ENCODE measurements at regions of chr9 and their contacts with region 1.

Region 1: DNA sequence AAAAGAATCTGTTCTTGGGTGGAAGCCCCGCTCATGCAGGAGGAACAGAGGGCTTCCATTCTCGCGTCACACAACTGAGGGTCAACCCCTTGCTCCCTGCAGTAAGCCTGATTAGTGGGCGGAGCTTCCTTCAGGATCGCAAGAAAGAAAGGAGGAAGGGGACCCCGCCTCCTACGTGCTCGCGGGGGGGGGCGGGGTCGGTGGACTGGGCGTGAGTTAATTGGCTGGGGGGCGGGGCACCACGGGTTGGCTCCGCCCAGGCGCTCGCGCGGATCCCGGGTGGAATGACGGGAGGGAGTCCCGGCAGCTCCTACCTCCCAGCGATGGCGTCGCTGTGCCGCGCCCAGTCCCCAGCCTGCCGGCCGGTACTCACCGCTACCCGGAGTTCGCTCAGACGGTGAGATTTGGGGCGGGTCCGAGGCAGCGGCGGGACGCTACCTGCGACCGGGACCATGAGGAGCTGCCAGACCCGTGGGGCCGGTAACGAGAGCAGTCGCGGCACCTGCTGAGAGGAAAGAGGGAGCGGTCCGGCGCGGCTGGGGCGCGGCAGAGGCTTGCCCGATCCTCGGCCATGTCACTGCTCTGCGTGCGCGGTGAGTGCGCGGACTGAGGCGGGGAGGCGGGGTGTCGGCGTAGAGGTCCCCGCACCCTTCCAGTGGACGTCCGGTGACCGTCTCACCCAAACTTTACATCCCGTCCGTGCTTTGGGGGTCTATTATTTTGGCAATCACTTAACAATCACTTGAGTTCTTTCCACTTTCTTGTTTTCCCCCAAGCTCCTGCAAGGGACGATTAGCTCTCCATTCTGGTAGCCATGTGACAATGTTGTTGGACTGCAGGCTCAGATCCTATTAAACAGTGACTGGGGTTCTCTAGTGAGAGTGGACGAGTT is at the start of gene UNC13B:
- DNase-seq: peak; percentile 91
- H3K4me3 ChIP-seq: peak within 1 kb of the TSS; percentile 71 to 97 (median 90)
- H3K27ac ChIP-seq: peak within 1 kb of the TSS; percentile 53
- H3K4me1 ChIP-seq: peaks cover 13% of the 10 kb centered on the region
- H3K27me3 ChIP-seq: no peaks in the 10 kb centered on the region
- CTCF ChIP-seq: peak in 1 of 2 donors; percentile 28
- total RNA-seq, gene UNC13B: 20.0 to 22.3 TPM

Region 2: DNA sequence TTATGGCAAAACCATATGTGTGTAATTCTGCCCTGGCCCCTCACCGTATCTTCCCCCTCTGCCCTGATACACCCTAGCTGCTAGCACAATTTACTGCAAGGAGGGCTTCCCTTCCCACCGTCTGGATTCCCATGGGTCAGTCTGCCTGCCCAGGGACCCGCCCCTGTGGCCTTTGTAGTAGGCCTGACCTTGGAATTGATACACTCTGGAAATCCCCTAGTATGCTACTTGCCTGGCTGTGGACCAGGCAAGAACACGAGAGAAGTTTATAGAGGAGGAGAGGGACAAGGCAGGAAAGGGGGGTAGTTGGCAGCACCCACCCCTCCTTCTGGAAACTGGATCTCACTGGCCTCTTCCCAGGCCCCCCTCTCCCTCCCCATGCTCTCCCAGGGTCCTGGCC is 336.2 kb before region 1 on chr9:
- CTCF ChIA-PET with region 1: no interaction called
- dilution Hi-C with region 1: no loop called
- in situ Hi-C with region 1: no loop called
- intact Hi-C with region 1: no loop called
- DNase-seq: no peak
- H3K4me3 ChIP-seq: no peak overlapping the region
- H3K27ac ChIP-seq: no peak overlapping the region
- H3K4me1 ChIP-seq: no peaks in the 10 kb centered on the region
- H3K27me3 ChIP-seq: peaks cover 3% of the 10 kb centered on the region
- CTCF ChIP-seq: no peak

Region 3: DNA sequence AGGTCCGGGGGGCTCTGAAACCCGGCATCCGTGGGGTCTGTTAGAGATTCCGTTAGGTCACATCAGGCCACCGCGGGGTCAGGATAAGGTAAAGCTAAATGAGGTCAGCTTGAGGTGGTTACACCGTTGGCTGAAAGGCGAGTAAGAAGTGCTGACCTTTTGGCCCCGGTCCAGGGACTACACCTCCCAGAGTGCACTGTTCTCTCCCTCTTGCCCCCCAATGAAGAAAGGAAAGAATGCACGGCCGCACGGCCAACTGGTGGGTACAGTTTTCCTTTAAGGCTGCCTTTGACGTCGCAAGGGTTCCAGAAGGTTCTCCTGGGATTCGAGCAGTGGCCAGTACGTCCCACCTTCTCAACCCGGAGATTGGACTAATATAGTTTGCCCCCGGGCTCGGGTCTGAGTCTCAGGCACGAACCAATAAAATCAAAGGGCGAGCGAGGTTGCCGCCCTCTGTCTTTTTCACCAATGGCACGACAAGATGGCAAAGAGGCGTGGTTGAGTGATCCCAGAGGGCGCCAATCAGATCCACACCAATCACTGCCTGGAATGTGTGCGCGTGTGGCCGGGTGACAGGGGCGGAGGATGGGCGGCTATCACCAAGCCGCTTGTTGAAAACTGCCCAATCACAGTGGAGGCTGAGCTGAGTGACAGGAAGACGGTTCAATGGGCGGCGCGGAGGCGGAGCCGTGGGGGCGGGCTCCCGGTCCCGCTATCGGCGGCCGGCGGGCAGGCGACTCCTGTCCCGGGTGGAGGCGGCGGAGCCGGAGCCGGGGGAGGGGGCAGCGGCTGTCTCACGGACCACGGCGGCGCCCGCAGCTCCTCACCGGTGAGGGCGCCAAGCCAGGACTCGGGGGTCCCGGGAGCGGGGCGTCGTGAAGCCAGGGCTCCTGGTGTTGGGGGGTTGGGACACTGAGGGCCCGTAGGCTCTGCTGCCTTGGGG is 172.7 kb before region 1 on chr9 and contains the start of gene DNAJB5:
- CTCF ChIA-PET with region 1: no interaction called
- dilution Hi-C with region 1: no loop called
- in situ Hi-C with region 1: no loop called
- intact Hi-C with region 1: no loop called
- DNase-seq: peak; percentile 99
- H3K4me3 ChIP-seq: peak within 1 kb of the TSS; percentile 63 to 88 (median 72)
- H3K27ac ChIP-seq: peak within 1 kb of the TSS; percentile 52
- H3K4me1 ChIP-seq: peaks cover 41% of the 10 kb centered on the region
- H3K27me3 ChIP-seq: no peaks in the 10 kb centered on the region
- CTCF ChIP-seq: no peak
- total RNA-seq, gene DNAJB5: 8.4 to 10.0 TPM

Region 4: DNA sequence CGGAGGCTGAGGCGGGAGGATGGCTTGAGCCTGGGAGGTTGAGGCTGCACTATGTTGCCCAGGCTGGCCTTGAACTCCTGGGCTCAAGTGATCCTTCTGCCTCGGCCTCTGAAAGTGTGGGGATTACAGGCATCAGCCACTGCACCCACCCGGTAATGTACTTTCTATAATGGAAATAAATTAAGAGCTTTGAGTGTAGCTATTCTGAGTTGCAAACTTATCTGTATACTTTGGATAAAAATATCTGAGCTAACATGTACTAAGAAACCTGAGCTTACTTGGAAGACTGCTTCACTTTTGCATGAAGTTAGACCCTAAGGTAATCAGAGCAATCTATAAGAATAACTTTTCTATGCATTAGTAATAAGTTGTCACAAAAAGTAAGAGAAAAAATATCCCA is 49.9 kb after region 1 on chr9:
- CTCF ChIA-PET with region 1: no interaction called
- dilution Hi-C with region 1: no loop called
- in situ Hi-C with region 1: no loop called
- intact Hi-C with region 1: loop called (anchors 10 kb)
- DNase-seq: no peak
- H3K4me3 ChIP-seq: no peak overlapping the region
- H3K27ac ChIP-seq: no peak overlapping the region
- H3K4me1 ChIP-seq: no peaks in the 10 kb centered on the region
- H3K27me3 ChIP-seq: no peaks in the 10 kb centered on the region
- CTCF ChIP-seq: no peak

Region 5: DNA sequence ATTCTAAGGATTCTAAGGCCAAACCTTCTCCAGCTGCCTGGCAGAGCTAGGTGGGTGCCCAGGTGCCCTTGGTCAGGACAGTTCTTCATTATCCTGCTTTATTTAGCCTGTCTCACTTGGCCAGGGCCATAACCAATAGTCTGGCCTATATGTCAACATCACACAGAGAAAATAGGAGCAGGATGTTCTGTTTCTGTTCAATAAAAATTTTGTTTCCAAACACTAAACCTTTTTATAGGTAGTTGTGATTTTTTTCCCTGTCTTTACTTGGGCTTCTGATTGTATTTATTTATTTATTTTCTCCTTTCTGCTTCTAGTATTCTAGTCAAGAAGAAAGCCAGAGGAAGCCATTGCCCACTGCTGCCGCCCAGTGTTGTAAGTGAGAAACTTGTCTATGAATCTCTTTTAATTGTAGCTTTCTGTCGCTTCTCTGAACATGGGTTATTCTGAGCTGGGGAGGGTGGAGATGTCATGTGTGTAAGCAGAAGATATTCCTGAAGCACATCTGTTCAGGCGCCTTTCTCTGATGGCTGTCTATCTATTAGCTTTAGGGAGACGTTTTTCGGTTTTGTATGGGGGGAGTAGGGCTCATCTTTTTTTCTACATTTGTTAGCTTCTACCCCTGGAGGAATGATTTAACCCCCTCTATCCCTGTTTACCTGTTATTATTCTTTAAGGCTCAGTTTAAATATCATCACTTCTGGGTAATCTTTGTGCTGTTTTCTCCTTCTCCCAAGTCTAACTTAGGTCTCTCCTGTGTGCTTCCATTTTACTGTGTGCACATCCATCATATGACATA is 96.9 kb after region 1 on chr9:
- CTCF ChIA-PET with region 1: no interaction called
- dilution Hi-C with region 1: no loop called
- in situ Hi-C with region 1: no loop called
- intact Hi-C with region 1: loop called (anchors 5 kb)
- DNase-seq: peak; percentile 51
- H3K4me3 ChIP-seq: no peak overlapping the region
- H3K27ac ChIP-seq: no peak overlapping the region
- H3K4me1 ChIP-seq: no peaks in the 10 kb centered on the region
- H3K27me3 ChIP-seq: no peaks in the 10 kb centered on the region
- CTCF ChIP-seq: peak; percentile 58 to 74